Activated CD4-positive, alpha-beta T cell treated with anti-CD3 and anti-CD28 coated beads, Interleukin-2, amount 10 ng/mL, durations not matched to agents 24 days and 14 days (primary cell): ENCODE measurements at regions of chr11 and their contacts with region 1.

Region 1: GRCh38 chr11:108008656-108009496 is at the start of gene CUL5:
- DNase-seq: peak; percentile 97
- H3K4me3 Mint-ChIP-seq: peak within 1 kb of the TSS; percentile 98
- H3K27ac Mint-ChIP-seq: peak within 1 kb of the TSS; percentile 97
- H3K4me1 Mint-ChIP-seq: peaks cover 18% of the 10 kb centered on the region
- H3K27me3 Mint-ChIP-seq: no peaks in the 10 kb centered on the region
- total RNA-seq, gene CUL5: 38.0 and 40.1 TPM in 2 replicates

Region 2: DNA sequence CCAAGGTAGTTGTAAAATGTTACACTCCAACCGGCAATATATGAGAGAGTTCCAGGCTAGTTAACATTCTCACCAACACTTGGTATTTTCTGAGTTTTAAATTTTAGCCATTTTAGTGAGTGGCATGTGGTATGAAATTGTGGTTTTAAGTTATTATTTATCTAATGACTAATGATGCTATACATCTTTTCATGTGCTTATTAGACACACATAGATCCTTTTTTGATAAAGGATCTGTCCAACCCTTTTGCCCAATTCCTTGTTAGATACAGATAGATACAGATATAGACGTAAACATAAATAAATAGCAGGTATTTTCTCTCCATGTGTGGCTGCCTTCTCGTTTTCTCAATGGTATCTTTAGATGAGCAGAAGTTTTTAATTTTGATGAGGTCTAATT is 482.7 kb before region 1 on chr11:
- intact Hi-C with region 1: no loop called
- DNase-seq: no peak
- H3K4me3 Mint-ChIP-seq: no peak overlapping the region
- H3K27ac Mint-ChIP-seq: no peak overlapping the region
- H3K4me1 Mint-ChIP-seq: no peaks in the 10 kb centered on the region
- H3K27me3 Mint-ChIP-seq: no peaks in the 10 kb centered on the region

Region 3: GRCh38 chr11:107928046-107928766 is 80.7 kb before region 1 on chr11 and contains the start of gene RAB39A:
- intact Hi-C with region 1: loop called (anchors 2 kb)
- DNase-seq: peak; percentile 90
- H3K4me3 Mint-ChIP-seq: peak within 1 kb of the TSS; percentile 77
- H3K27ac Mint-ChIP-seq: peak within 1 kb of the TSS; percentile 45
- H3K4me1 Mint-ChIP-seq: peaks cover 6% of the 10 kb centered on the region
- H3K27me3 Mint-ChIP-seq: peaks cover 29% of the 10 kb centered on the region
- total RNA-seq, gene RAB39A: not detected in 2 replicates

Region 4: GRCh38 chr11:107988397-107989158 is 20.3 kb before region 1 on chr11:
- intact Hi-C with region 1: no loop called
- DNase-seq: no peak
- H3K4me3 Mint-ChIP-seq: no peak overlapping the region
- H3K27ac Mint-ChIP-seq: no peak overlapping the region
- H3K4me1 Mint-ChIP-seq: no peaks in the 10 kb centered on the region
- H3K27me3 Mint-ChIP-seq: peaks cover 5% of the 10 kb centered on the region

Region 5: DNA sequence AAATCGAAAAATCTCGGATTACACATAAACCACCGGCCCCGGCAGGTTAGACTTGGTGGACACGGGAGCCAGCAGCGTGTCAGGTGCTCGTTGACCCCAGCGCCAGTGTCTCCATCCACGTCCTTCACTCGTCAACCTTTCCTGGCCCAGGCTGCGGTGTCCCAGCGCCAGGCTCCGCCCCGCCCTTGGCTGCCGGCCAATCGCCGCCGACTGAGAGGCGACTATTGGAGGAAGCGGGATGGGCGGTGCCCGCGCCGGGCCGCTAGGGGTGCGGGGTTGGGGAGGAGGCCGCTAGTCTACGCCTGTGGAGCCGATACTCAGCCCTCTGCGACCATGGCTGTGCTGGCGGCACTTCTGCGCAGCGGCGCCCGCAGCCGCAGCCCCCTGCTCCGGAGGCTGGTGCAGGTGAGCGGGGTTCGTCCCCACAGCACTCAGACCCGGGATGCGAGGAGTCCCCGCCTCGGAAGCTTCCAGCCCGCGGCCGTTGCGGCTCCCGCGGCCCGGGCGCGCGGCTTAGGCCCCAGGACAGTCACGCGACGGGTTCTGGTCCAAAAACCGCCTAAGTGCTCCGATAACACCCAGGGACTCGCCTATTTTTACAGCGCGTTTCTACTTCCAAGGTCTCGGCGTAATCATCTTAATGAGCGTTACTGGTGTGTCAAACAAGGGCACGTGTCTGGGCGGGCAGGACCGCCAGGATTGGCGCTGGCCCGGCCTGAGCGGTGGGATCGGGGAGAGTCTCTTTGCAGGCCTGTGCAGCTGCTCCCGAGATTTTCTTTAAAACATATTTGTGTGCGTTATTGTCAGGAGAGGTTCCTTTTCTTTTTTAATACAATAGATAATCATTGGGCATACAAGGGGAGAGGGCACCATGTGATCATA is 112.6 kb after region 1 on chr11 and contains the start of gene ACAT1:
- intact Hi-C with region 1: loop called (anchors 2 kb)
- DNase-seq: peak; percentile 99
- H3K4me3 Mint-ChIP-seq: peak within 1 kb of the TSS; percentile 87
- H3K27ac Mint-ChIP-seq: peak within 1 kb of the TSS; percentile 84
- H3K4me1 Mint-ChIP-seq: peaks cover 33% of the 10 kb centered on the region
- H3K27me3 Mint-ChIP-seq: no peaks in the 10 kb centered on the region
- total RNA-seq, gene ACAT1: 65.0 and 65.9 TPM in 2 replicates

Region 6: DNA sequence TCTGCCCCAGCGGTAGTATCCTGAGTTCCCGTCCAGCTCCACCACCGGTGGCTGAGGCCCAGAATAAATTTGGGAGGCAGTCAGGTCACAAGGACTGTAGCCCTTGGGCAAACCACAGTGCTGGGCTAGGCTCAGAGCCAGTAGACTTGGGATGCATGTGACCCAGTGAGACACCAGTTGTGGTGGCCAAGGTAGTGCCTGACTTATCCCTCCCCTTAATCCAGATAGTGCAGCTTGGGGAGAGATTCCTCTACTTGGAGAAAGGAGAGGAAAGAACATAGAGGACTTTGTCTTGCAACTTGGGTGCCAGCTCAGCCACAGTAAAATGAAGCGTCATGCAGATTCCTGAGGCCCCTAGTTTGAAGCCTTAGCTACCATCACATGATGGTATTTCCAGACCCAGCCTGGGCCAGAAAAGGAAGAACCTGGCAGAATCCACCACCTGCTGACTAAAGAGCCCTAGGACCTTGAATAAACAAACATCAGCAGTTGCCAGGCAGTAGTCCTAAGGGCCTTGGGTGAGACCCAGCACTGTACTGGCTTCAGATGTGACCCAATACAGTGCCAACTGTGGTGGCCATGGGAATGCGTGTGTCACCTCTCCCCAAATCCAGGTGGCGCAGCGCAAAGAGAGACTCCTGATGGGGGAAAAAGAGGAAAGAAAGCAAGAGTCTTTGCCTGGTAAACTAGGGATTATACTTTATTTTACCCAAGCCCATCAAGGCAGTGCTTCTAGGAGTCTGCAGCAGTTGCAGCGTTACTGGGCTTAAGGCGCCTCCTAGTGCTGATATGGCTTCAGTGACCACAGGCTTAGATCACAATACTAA is 639.0 kb after region 1 on chr11:
- intact Hi-C with region 1: loop called (anchors 2 kb)
- DNase-seq: peak; percentile 89
- H3K4me3 Mint-ChIP-seq: no peak overlapping the region
- H3K27ac Mint-ChIP-seq: no peak overlapping the region
- H3K4me1 Mint-ChIP-seq: no peaks in the 10 kb centered on the region
- H3K27me3 Mint-ChIP-seq: peaks cover 12% of the 10 kb centered on the region